Calu3 (cell line): ENCODE measurements at regions of chrX and their contacts with region 1.

Region 1: GRCh38 chrX:31279359-31279758 is 207.5 kb upstream of the FTHL17 start:
- DNase-seq: peak; percentile 8
- H3K4me3 Mint-ChIP-seq: no peak overlapping the region
- H3K27ac Mint-ChIP-seq: no peak overlapping the region
- H3K4me1 Mint-ChIP-seq: peaks cover 13% of the 10 kb centered on the region
- H3K27me3 Mint-ChIP-seq: no peaks in the 10 kb centered on the region
- CTCF ChIP-seq: no peak

Region 2: GRCh38 chrX:31266172-31267076 is 12.9 kb before region 1 on chrX:
- CTCF ChIA-PET with region 1: interaction called, 11 read pairs
- intact Hi-C with region 1: no loop called
- DNase-seq: peak; percentile 71
- H3K4me3 Mint-ChIP-seq: peak overlapping the region; percentile 82
- H3K27ac Mint-ChIP-seq: peak overlapping the region; percentile 45
- H3K4me1 Mint-ChIP-seq: peaks cover 5% of the 10 kb centered on the region
- H3K27me3 Mint-ChIP-seq: no peaks in the 10 kb centered on the region
- CTCF ChIP-seq: no peak

Region 3: DNA sequence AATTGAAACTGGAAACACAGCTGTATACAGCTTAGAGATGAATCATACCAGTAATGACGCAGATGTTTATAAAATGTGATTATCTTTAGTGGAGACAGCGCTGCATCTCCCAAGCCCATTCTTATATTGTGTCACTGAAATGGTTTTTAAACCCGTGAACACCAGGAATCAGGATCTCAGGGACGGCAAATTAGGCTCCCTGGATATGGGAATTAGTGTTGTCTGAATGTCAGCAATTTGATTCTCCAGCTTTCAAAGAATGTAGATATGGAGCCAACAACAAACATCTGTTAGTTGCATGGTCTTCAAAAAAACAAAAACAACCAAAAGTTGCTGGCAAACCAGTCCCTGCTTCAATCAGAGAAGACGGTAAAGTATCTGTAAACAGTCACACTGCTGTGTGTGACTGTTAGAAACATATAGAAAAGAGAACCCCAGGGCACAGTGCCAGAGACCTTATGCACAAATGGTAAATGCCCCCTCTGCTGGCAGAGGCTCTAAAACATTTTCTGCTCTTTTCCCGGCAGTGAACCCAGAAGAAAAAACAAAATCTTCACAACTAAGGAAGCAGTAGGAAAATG is 144.3 kb after region 1 on chrX:
- CTCF ChIA-PET with region 1: interaction called, 5 read pairs
- intact Hi-C with region 1: loop called (anchors 5 kb)
- DNase-seq: peak; percentile 60
- H3K4me3 Mint-ChIP-seq: no peak overlapping the region
- H3K27ac Mint-ChIP-seq: no peak overlapping the region
- H3K4me1 Mint-ChIP-seq: no peaks in the 10 kb centered on the region
- H3K27me3 Mint-ChIP-seq: no peaks in the 10 kb centered on the region
- CTCF ChIP-seq: peak; percentile 29

Region 4: GRCh38 chrX:31445542-31445941 is 166.2 kb after region 1 on chrX:
- CTCF ChIA-PET with region 1: no interaction called
- intact Hi-C with region 1: no loop called
- DNase-seq: no peak
- H3K4me3 Mint-ChIP-seq: no peak overlapping the region
- H3K27ac Mint-ChIP-seq: no peak overlapping the region
- H3K4me1 Mint-ChIP-seq: no peaks in the 10 kb centered on the region
- H3K27me3 Mint-ChIP-seq: no peaks in the 10 kb centered on the region
- CTCF ChIP-seq: no peak

Region 5: GRCh38 chrX:31508338-31508737 is 229.0 kb after region 1 on chrX:
- CTCF ChIA-PET with region 1: no interaction called
- intact Hi-C with region 1: loop called (anchors 10 kb)
- DNase-seq: peak; percentile 47
- H3K4me3 Mint-ChIP-seq: peak overlapping the region; percentile 53
- H3K27ac Mint-ChIP-seq: peak overlapping the region; percentile 85
- H3K4me1 Mint-ChIP-seq: peaks cover 29% of the 10 kb centered on the region
- H3K27me3 Mint-ChIP-seq: no peaks in the 10 kb centered on the region
- CTCF ChIP-seq: no peak

Region 6: DNA sequence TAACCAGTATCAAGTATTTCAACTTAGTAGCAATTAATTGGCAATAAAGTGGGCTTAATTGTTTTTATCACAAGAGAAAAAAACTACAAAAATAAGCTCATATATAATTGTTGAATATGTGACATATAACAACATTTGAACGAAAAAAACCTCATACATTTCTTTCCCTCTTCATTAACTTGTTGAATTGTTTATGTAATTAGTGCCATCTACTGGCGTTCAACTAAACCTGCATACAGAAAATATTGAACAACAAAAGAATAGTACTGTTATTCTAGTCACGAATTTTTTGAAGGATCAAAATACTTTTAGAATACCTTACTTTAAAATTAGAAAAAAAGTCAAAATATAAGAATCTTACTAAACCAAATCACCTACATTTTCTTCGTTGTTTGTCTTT is 379.0 kb after region 1 on chrX:
- CTCF ChIA-PET with region 1: interaction called, 3 read pairs
- intact Hi-C with region 1: loop called (anchors 2 kb)
- DNase-seq: no peak
- H3K4me3 Mint-ChIP-seq: no peak overlapping the region
- H3K27ac Mint-ChIP-seq: no peak overlapping the region
- H3K4me1 Mint-ChIP-seq: peaks cover 7% of the 10 kb centered on the region
- H3K27me3 Mint-ChIP-seq: no peaks in the 10 kb centered on the region
- CTCF ChIP-seq: peak; percentile 17